ENCODE measurements at regions of chr6 and their contacts with region 1.

Region 1: DNA sequence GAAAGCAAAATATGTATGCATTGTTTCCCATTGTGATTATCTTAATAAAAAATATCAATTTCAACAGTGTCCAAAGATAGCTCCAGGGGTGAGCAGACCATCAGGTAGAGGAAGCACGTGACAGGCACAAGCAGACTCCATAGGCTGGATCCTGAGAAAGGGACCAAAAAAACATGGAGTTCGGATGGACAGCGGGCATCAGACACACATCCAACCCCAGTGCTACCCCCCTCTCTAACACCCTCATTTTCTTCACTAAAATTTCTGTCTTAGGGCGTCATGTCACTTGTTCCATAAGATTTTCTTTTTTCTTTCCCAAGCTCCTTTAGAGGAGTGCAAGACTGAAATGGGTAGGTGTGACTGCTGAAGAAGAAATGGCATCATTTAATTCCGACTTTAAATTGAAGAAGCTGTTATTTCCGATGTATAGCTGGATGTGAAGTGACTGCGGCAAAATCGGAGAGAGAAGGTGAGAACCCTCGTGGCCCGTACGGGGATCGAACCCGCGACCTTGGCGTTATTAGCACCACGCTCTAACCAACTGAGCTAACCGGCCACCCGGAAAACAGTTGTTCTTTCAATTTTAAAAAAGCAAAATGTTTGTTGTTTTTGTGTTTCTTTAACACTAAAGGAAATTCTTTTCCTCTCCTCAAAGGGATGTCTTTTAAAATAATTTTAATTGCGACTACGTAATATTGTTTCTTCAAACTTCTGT is 10.3 kb upstream of the PRSS16 start:
- DNase-seq: no peak
- H3K4me3 Mint-ChIP-seq: peak overlapping the region; percentile 71
- H3K27ac Mint-ChIP-seq: peak overlapping the region; percentile 25
- H3K4me1 Mint-ChIP-seq: peaks cover 23% of the 10 kb centered on the region
- H3K27me3 Mint-ChIP-seq: peaks cover 46% of the 10 kb centered on the region

Region 2: GRCh38 chr6:27213544-27214125 is 23.6 kb before region 1 on chr6:
- intact Hi-C with region 1: loop called (anchors 2 kb)
- DNase-seq: no peak
- H3K4me3 Mint-ChIP-seq: no peak overlapping the region
- H3K27ac Mint-ChIP-seq: no peak overlapping the region
- H3K4me1 Mint-ChIP-seq: no peaks in the 10 kb centered on the region
- H3K27me3 Mint-ChIP-seq: peaks cover 26% of the 10 kb centered on the region

Region 3: DNA sequence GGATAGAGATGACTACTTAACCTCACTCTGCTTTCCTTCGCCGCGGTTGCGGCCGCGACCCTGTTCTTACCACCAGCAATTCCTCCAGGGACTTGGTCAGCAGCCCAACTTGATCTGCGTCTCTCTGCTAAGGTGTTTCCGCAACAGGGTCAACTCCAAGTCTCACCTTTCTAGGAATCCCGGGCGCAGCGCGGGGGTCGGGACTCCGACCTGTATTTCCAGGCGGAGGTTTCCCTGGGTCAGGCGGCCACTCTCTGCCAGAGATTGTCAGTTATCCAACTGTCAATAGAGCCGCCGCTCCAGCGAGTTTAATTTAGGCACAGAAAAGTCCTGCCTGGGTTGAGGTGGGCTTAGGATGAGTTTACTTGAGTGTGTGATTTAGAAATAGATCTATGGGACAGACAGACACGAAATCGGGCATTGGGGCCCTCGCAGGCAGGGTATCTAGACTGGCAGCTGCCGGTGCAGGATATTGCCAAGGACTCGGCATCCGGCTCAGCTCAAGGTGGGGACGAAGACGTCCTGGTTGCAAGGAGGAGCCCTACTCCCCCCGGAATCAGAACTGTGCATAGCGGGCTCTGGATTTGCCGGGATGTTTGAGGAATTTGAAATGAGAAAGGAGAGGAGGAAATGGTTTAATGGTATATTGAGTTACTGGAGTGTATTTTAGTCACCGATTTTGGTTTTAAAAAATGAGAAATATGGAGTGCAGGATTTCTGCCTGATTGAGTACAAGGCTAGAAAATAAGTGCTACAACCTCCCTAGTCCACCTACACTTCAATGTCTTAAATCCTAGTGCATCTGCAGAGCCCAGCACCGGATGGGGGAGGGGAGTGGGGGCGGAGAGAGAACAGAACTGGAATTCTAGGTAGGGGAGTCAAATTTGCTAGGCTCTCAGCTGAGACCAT is 51.1 kb after region 1 on chr6:
- intact Hi-C with region 1: loop called (anchors 2 kb)
- DNase-seq: no peak
- H3K4me3 Mint-ChIP-seq: no peak overlapping the region
- H3K27ac Mint-ChIP-seq: peak overlapping the region; percentile 5
- H3K4me1 Mint-ChIP-seq: peaks cover 13% of the 10 kb centered on the region
- H3K27me3 Mint-ChIP-seq: peaks cover 80% of the 10 kb centered on the region